CD8-positive, alpha-beta T cell (primary cell): ENCODE measurements at regions of chr16 and their contacts with region 1.

Region 1: GRCh38 chr16:21574381-21574780 is 25.0 kb upstream of the METTL9 start:
- DNase-seq: no peak
- ATAC-seq: no peak
- H3K4me3 ChIP-seq: no peak overlapping the region
- H3K4me3 Mint-ChIP-seq: no peak overlapping the region
- H3K27ac ChIP-seq: no peak overlapping the region
- H3K27ac Mint-ChIP-seq: no peak overlapping the region
- H3K4me1 ChIP-seq: no peaks in the 10 kb centered on the region
- H3K4me1 Mint-ChIP-seq: no peaks in the 10 kb centered on the region
- H3K27me3 ChIP-seq: no peaks in the 10 kb centered on the region
- H3K27me3 Mint-ChIP-seq: peaks cover 9% of the 10 kb centered on the region
- CTCF ChIP-seq: no peak

Region 2: GRCh38 chr16:21126518-21126917 is 447.9 kb before region 1 on chr16:
- CTCF ChIA-PET with region 1: no interaction called
- POLR2A ChIA-PET with region 1: no interaction called
- intact Hi-C with region 1: no loop called
- DNase-seq: no peak
- ATAC-seq: no peak
- H3K4me3 ChIP-seq: no peak overlapping the region
- H3K4me3 Mint-ChIP-seq: no peak overlapping the region
- H3K27ac ChIP-seq: no peak overlapping the region
- H3K27ac Mint-ChIP-seq: no peak overlapping the region
- H3K4me1 ChIP-seq: no peaks in the 10 kb centered on the region
- H3K4me1 Mint-ChIP-seq: no peaks in the 10 kb centered on the region
- H3K27me3 ChIP-seq: no peaks in the 10 kb centered on the region
- H3K27me3 Mint-ChIP-seq: peaks cover 5% of the 10 kb centered on the region
- CTCF ChIP-seq: no peak

Region 3: GRCh38 chr16:21341101-21341500 is 233.3 kb before region 1 on chr16:
- CTCF ChIA-PET with region 1: no interaction called
- POLR2A ChIA-PET with region 1: no interaction called
- intact Hi-C with region 1: no loop called
- DNase-seq: no peak
- ATAC-seq: no peak
- H3K4me3 ChIP-seq: no peak overlapping the region
- H3K4me3 Mint-ChIP-seq: no peak overlapping the region
- H3K27ac ChIP-seq: no peak overlapping the region
- H3K27ac Mint-ChIP-seq: no peak overlapping the region
- H3K4me1 ChIP-seq: no peaks in the 10 kb centered on the region
- H3K4me1 Mint-ChIP-seq: no peaks in the 10 kb centered on the region
- H3K27me3 ChIP-seq: no peaks in the 10 kb centered on the region
- H3K27me3 Mint-ChIP-seq: peaks cover 14% of the 10 kb centered on the region
- CTCF ChIP-seq: no peak

Region 4: GRCh38 chr16:21501909-21502667 is 72.3 kb before region 1 on chr16:
- CTCF ChIA-PET with region 1: no interaction called
- POLR2A ChIA-PET with region 1: no interaction called
- intact Hi-C with region 1: no loop called
- DNase-seq: peak; percentile 78 to 97 (median 89)
- ATAC-seq: peak; percentile 85
- H3K4me3 ChIP-seq: peak overlapping the region; percentile 90 to 91
- H3K4me3 Mint-ChIP-seq: peak overlapping the region; percentile 92
- H3K27ac ChIP-seq: peak overlapping the region; percentile 73 to 97
- H3K27ac Mint-ChIP-seq: peak overlapping the region; percentile 91
- H3K4me1 ChIP-seq: peaks cover 18% of the 10 kb centered on the region
- H3K4me1 Mint-ChIP-seq: peaks cover 16% of the 10 kb centered on the region
- H3K27me3 ChIP-seq: no peaks in the 10 kb centered on the region
- H3K27me3 Mint-ChIP-seq: no peaks in the 10 kb centered on the region
- CTCF ChIP-seq: no peak

Region 5: GRCh38 chr16:22063888-22064467 is 489.6 kb after region 1 on chr16:
- CTCF ChIA-PET with region 1: no interaction called
- POLR2A ChIA-PET with region 1: no interaction called
- intact Hi-C with region 1: loop called in 1 of 2 experiments (anchors 10 kb)
- DNase-seq: no peak
- ATAC-seq: no peak
- H3K4me3 ChIP-seq: no peak overlapping the region
- H3K4me3 Mint-ChIP-seq: no peak overlapping the region
- H3K27ac ChIP-seq: no peak overlapping the region
- H3K27ac Mint-ChIP-seq: peak overlapping the region; percentile 7
- H3K4me1 ChIP-seq: no peaks in the 10 kb centered on the region
- H3K4me1 Mint-ChIP-seq: no peaks in the 10 kb centered on the region
- H3K27me3 ChIP-seq: no peaks in the 10 kb centered on the region
- H3K27me3 Mint-ChIP-seq: no peaks in the 10 kb centered on the region
- CTCF ChIP-seq: no peak

Region 6: GRCh38 chr16:22407486-22407885 is 833.1 kb after region 1 on chr16:
- CTCF ChIA-PET with region 1: no interaction called
- POLR2A ChIA-PET with region 1: no interaction called
- intact Hi-C with region 1: loop called in 1 of 2 experiments (anchors 5 kb)
- DNase-seq: no peak
- ATAC-seq: no peak
- H3K4me3 ChIP-seq: no peak overlapping the region
- H3K4me3 Mint-ChIP-seq: no peak overlapping the region
- H3K27ac ChIP-seq: no peak overlapping the region
- H3K27ac Mint-ChIP-seq: no peak overlapping the region
- H3K4me1 ChIP-seq: no peaks in the 10 kb centered on the region
- H3K4me1 Mint-ChIP-seq: peaks cover 7% of the 10 kb centered on the region
- H3K27me3 ChIP-seq: no peaks in the 10 kb centered on the region
- H3K27me3 Mint-ChIP-seq: no peaks in the 10 kb centered on the region
- CTCF ChIP-seq: no peak